Activated naive CD8-positive, alpha-beta T cell treated with anti-CD3 and anti-CD28 coated beads, Interleukin-2, amount 10 ng/mL, durations not matched to agents 7 days and 5 days (primary cell): ENCODE measurements at regions of chr19 and their contacts with region 1.

Region 1: DNA sequence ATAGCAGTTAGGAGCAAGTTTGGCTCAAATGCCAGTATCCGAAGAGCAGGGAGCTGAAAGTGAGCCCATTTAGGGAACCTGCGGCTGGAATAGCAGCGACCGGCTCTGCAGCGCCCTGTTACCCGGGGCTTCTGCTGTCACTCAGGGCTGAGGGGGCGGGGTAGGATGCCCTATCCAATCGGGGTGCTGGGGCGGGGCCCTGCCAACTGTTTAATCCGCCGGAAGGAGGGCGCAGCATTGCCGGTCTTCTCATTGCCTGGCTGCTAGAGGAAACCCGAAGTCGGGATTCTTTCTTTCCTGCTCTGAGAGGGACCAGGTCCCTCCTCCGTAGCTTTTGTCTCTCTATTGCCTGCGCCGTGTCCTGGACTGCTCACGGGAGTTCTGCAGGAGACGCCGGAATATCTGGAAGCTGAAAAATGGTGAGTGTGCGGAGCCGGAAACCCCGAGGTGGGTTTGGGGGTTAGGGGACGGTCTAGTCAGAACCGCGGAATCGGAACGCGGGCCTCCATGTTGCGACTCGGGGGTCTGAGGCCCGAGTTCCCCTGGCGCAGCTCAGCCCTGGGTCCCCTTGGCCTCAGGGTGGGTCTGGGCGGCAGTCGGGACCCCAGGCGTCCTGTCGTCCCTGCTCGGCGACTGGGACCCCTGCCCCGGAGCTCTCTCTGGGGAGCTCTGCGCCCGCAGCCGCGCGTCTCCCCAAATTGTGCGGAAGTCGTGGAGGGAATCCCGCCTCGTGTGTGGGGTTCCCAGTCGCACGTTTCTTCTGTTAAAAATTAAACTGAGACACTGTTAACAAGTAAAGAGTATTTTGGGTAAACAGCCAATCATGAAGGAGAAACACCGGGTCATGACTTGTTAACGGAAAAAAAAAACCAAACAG is 22.8 kb downstream of the ZNF763 start:
- DNase-seq: peak; percentile 91
- ATAC-seq: peak; percentile 92
- H3K4me3 Mint-ChIP-seq: peak overlapping the region; percentile 95
- H3K27ac Mint-ChIP-seq: peak overlapping the region; percentile 97
- H3K4me1 Mint-ChIP-seq: peaks cover 18% of the 10 kb centered on the region
- H3K27me3 Mint-ChIP-seq: no peaks in the 10 kb centered on the region

Region 2: DNA sequence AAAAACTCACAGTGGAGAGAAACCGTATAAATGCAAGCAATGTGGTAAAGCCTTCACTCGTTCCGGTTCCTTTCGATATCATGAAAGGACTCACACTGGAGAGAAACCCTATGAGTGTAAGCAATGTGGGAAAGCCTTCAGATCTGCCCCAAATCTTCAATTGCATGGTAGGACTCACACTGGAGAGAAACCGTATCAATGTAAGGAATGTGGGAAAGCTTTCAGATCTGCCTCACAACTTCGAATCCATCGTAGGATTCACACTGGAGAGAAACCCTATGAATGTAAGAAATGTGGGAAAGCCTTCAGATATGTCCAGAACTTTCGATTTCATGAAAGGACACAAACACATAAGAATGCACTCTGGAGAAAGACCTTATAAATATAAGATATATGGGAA is 119.5 kb before region 1 on chr19:
- POLR2A ChIA-PET with region 1: no interaction called
- DNase-seq: no peak
- ATAC-seq: no peak
- H3K4me3 Mint-ChIP-seq: no peak overlapping the region
- H3K27ac Mint-ChIP-seq: no peak overlapping the region
- H3K4me1 Mint-ChIP-seq: no peaks in the 10 kb centered on the region
- H3K27me3 Mint-ChIP-seq: no peaks in the 10 kb centered on the region

Region 3: GRCh38 chr19:11964858-11965645 is 22.6 kb before region 1 on chr19 and contains the start of gene ZNF763:
- POLR2A ChIA-PET with region 1: interaction called, 34 read pairs
- DNase-seq: peak; percentile 88
- ATAC-seq: peak; percentile 93
- H3K4me3 Mint-ChIP-seq: peak within 1 kb of the TSS; percentile 96
- H3K27ac Mint-ChIP-seq: peak within 1 kb of the TSS; percentile 93
- H3K4me1 Mint-ChIP-seq: peaks cover 20% of the 10 kb centered on the region
- H3K27me3 Mint-ChIP-seq: no peaks in the 10 kb centered on the region
- total RNA-seq, gene ZNF763: 5.2 to 6.1 TPM

Region 4: GRCh38 chr19:12000152-12000981 is 12.7 kb after region 1 on chr19:
- POLR2A ChIA-PET with region 1: no interaction called
- DNase-seq: no peak
- ATAC-seq: peak; percentile 58
- H3K4me3 Mint-ChIP-seq: peak overlapping the region; percentile 38
- H3K27ac Mint-ChIP-seq: peak overlapping the region; percentile 69
- H3K4me1 Mint-ChIP-seq: peaks cover 12% of the 10 kb centered on the region
- H3K27me3 Mint-ChIP-seq: no peaks in the 10 kb centered on the region

Region 5: GRCh38 chr19:12015015-12015752 is 27.5 kb after region 1 on chr19:
- POLR2A ChIA-PET with region 1: no interaction called
- DNase-seq: no peak
- ATAC-seq: no peak
- H3K4me3 Mint-ChIP-seq: no peak overlapping the region
- H3K27ac Mint-ChIP-seq: no peak overlapping the region
- H3K4me1 Mint-ChIP-seq: no peaks in the 10 kb centered on the region
- H3K27me3 Mint-ChIP-seq: no peaks in the 10 kb centered on the region

Region 6: DNA sequence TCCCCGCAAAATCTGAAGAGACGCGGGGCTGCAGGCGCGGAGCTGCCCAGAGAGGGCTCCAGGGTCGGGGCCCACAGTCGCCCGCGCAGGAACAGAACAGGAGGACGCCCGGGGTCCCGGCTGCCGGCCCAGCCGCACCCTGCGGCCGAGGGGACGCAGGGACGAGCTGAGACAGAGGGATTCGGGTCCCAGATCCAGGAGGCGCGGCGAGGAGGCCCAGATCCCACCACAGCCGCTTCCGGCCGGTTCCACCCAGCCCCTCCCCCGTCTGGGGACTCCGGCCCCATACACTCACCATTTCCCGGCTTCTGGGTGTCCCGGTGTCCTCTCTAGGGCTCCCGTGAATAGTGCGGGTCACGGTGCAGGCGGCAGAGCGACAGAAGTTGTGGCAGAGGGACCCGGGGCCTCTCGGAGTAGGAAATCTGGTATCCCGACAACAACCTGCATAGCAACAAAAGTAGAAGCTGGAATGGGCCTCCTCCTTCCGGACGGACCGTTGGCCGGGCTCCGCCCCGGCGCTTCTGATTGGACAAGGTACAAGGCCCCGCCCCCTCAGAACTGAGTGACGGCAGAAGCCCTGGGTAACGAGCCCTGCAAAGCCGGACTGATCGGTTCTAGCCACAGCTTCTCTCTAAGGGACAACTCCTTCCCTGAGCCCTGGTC is 152.4 kb after region 1 on chr19 and contains the start of gene ZNF20:
- POLR2A ChIA-PET with region 1: interaction called, 10 read pairs
- DNase-seq: peak; percentile 90
- ATAC-seq: peak; percentile 91
- H3K4me3 Mint-ChIP-seq: peak within 1 kb of the TSS; percentile 94
- H3K27ac Mint-ChIP-seq: peak within 1 kb of the TSS; percentile 67
- H3K4me1 Mint-ChIP-seq: peaks cover 23% of the 10 kb centered on the region
- H3K27me3 Mint-ChIP-seq: no peaks in the 10 kb centered on the region
- total RNA-seq, gene ZNF20: 5.9 to 7.2 TPM